HCT116 (cell line): ENCODE measurements at regions of chr3 and their contacts with region 1.

Region 1: DNA sequence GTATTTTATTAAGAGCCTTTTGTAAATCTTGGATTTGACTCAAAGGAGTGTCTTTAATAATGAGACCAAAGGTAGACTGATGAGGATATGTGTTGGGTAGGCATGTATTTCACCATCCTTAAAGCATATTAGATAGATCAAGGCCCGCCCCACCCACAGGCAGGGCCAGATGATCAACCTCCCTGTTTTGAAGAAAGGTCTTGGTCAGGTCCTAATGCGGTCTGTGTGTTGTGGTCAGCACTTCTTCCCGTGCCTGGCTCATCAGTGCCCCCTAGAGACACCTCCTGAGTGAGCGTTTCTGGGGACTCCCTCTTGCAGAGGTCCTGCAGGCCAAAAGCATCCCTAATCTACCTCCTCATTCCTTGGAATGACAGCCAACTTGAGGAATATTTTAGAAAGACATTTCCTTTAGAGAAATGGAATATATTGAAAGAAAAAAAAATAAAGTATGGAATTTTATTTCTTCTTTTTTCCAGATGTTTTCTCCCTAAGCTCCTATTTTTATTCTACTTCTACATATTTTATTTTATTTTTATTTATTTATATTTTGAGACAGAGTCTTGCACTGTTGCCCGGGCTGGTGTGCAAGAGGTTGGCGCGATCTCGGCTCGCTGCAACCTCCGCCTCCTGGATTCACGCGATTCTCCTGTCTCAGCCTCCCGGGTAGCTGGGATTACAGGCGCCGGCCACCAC is 6.0 kb downstream of the TM4SF4 start:
- DNase-seq: peak; percentile 76
- ATAC-seq: peak; percentile 100
- H3K4me3 ChIP-seq: no peak overlapping the region
- H3K27ac ChIP-seq: no peak overlapping the region
- H3K4me1 ChIP-seq: peaks cover 0 to 6% of the 10 kb centered on the region in 2 experiments; a peak in 3 of 4 replicates
- H3K27me3 ChIP-seq: no peaks in the 10 kb centered on the region
- CTCF ChIP-seq: peak; percentile 92 to 97 (median 93); a peak in 5 of 6 replicates
- POLR2A ChIP-seq: no peak
- RAD21 ChIP-seq: peak; percentile 98

Region 2: GRCh38 chr3:149273096-149273751 is 207.2 kb before region 1 on chr3:
- CTCF ChIA-PET with region 1: no interaction called
- POLR2A ChIA-PET with region 1: no interaction called
- RAD21 ChIA-PET with region 1: no interaction called
- intact Hi-C with region 1: loop called (anchors 2 kb)
- DNase-seq: peak; percentile 86
- ATAC-seq: peak; percentile 95
- H3K4me3 ChIP-seq: no peak overlapping the region
- H3K27ac ChIP-seq: no peak overlapping the region
- H3K4me1 ChIP-seq: no peaks in the 10 kb centered on the region
- H3K27me3 ChIP-seq: no peaks in the 10 kb centered on the region
- CTCF ChIP-seq: peak; percentile 90 to 100 (median 98)
- POLR2A ChIP-seq: no peak
- RAD21 ChIP-seq: peak; percentile 99

Region 3: DNA sequence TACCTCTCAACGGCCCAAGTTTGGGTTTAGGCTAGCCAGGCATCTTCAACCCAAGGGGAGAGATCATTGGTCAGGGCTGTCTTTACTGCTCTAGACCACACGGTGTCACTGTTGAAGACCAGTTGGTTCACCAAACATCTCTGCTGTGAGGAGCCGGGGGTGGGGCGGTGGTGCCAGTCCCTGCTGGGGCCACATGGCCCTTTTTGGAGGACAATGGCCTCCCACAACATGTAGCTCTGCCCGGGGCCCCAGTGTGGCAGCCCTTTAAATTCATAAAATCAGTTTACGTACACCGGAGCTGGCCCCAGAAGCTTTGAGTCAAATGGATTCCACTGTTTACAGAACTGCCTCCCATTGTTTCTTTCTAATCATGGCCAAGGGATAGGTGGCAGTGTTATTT is 127.9 kb before region 1 on chr3:
- CTCF ChIA-PET with region 1: no interaction called
- POLR2A ChIA-PET with region 1: no interaction called
- RAD21 ChIA-PET with region 1: no interaction called
- intact Hi-C with region 1: loop called (anchors 1 kb)
- DNase-seq: peak; percentile 75
- ATAC-seq: peak; percentile 99
- H3K4me3 ChIP-seq: no peak overlapping the region
- H3K27ac ChIP-seq: no peak overlapping the region
- H3K4me1 ChIP-seq: peaks cover 3 to 8% of the 10 kb centered on the region in 2 experiments; a peak in 3 of 4 replicates
- H3K27me3 ChIP-seq: no peaks in the 10 kb centered on the region
- CTCF ChIP-seq: peak; percentile 79 to 86 (median 84)
- POLR2A ChIP-seq: no peak
- RAD21 ChIP-seq: peak; percentile 88

Region 4: DNA sequence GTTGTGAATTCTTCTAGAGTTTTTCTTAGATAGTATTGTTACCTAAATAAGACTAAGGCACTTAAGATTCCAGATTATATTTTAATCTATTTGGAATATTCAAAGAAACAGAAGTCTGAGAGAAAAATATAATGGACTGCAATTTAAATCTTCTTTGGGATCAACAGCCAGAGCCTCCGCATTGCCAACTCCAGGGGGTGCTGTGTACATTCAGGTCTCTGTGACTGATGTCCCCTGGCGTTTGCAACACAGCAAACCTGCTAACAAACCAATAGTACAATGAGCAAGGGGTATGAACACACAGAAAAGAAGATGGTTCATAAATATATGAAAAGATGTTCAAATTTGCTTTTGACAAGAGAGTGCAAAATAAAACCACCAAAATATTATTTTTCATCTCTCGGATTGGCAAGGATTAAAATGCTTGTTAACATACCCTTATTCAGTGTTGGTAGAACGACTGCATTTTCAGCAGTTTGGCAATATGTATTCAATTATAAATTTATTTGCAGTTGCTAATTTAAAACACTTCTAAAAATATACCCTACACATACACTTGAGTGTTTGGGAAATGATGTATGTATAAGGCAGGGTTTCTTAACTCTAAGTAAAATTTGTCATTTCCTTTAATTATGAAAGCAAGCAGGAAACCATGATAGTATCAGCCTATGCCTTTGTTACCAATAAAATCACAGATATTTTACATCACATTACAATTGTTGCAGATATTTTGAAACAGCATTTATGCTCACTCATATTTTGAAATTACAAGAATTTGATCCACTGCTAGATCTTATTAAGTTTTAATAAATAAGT is 86.9 kb before region 1 on chr3:
- CTCF ChIA-PET with region 1: interaction called, 3 read pairs
- POLR2A ChIA-PET with region 1: no interaction called
- RAD21 ChIA-PET with region 1: no interaction called
- intact Hi-C with region 1: loop called (anchors 1 kb)
- DNase-seq: peak; percentile 72
- ATAC-seq: peak; percentile 92
- H3K4me3 ChIP-seq: no peak overlapping the region
- H3K27ac ChIP-seq: no peak overlapping the region
- H3K4me1 ChIP-seq: peaks cover 0 to 22% of the 10 kb centered on the region in 2 experiments; a peak in 2 of 4 replicates
- H3K27me3 ChIP-seq: no peaks in the 10 kb centered on the region
- CTCF ChIP-seq: peak; percentile 96 to 98 (median 98)
- POLR2A ChIP-seq: no peak
- RAD21 ChIP-seq: peak; percentile 88